ENCODE measurements at regions of chr2 and their contacts with region 1.

Region 1: GRCh38 chr2:172710584-172711024 is 25.0 kb upstream of the RAPGEF4 start:
- DNase-seq: peak; percentile 94
- H3K4me3 ChIP-seq: no peak overlapping the region
- H3K27ac ChIP-seq: no peak overlapping the region
- H3K4me1 ChIP-seq: peaks cover 6% of the 10 kb centered on the region
- H3K27me3 ChIP-seq: no peaks in the 10 kb centered on the region
- CTCF ChIP-seq: peak; percentile 78 to 84

Region 2: DNA sequence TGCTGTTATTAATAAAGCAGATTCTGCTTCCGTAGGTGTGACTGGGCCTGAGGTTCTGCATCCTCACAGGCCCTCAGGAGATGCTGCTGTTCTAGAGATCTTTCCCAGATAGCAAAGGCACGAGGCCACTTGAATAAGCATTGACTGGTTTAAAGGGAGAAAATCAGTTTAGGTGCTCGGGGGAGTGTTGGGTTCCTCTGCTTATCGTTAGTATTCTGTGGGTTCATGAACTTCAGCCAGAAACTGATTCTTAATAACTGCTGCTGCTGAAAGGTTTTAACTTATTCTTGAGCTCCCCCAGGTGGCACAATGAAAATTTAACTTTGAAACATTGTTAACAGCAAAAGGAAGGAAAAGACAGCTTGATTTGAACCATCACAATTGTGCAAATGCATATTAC is 226.4 kb before region 1 on chr2:
- CTCF ChIA-PET with region 1: no interaction called
- dilution Hi-C with region 1: no loop called
- in situ Hi-C with region 1: loop called in 1 of 2 experiments (anchors 25 kb)
- intact Hi-C with region 1: no loop called
- DNase-seq: no peak
- H3K4me3 ChIP-seq: no peak overlapping the region
- H3K27ac ChIP-seq: no peak overlapping the region
- H3K4me1 ChIP-seq: no peaks in the 10 kb centered on the region
- H3K27me3 ChIP-seq: no peaks in the 10 kb centered on the region
- CTCF ChIP-seq: peak; percentile 6 to 16

Region 3: GRCh38 chr2:172516299-172516698 is 194.3 kb before region 1 on chr2:
- CTCF ChIA-PET with region 1: no interaction called
- dilution Hi-C with region 1: no loop called
- in situ Hi-C with region 1: no loop called
- intact Hi-C with region 1: loop called (anchors 5 kb)
- DNase-seq: peak; percentile 69
- H3K4me3 ChIP-seq: no peak overlapping the region
- H3K27ac ChIP-seq: no peak overlapping the region
- H3K4me1 ChIP-seq: no peaks in the 10 kb centered on the region
- H3K27me3 ChIP-seq: no peaks in the 10 kb centered on the region
- CTCF ChIP-seq: no peak

Region 4: DNA sequence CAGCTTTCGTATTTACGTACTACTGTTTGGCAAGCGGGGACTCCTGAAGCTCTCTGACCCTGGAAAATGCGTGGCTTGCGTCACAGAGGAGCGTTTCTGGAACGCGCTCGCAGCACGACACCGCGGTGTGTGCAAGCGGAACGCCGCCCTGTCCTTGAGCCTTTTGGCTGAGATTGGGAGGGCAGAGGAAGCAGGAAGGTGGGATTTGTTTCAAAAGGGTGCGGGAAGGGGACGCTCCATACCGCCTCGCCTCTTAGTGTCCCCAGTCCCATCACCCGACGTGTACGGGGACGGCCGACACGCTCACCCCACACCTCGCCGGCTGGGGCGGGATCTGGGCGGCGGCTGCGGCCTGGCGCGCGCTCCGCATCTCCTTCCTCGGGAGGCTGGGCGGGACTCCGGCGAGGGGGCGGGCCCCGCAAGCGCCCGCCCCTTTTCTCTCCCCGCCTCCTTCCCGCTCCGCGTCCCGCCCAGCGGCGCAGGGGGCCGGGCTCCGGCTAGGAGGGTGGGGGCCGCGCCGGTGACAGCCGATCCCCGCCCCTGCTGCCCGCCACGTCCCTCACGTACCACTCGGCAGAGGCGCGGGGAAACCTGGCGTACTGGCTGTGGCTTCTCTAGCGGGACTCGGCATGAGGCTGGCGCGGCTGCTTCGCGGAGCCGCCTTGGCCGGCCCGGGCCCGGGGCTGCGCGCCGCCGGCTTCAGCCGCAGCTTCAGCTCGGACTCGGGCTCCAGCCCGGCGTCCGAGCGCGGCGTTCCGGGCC is 154.9 kb before region 1 on chr2 and contains the start of gene PDK1:
- CTCF ChIA-PET with region 1: no interaction called
- dilution Hi-C with region 1: no loop called
- in situ Hi-C with region 1: no loop called
- intact Hi-C with region 1: loop called (anchors 1 kb)
- DNase-seq: peak; percentile 92
- H3K4me3 ChIP-seq: peak within 1 kb of the TSS; percentile 84 to 94 (median 94)
- H3K27ac ChIP-seq: peak within 1 kb of the TSS; percentile 98
- H3K4me1 ChIP-seq: peaks cover 45% of the 10 kb centered on the region
- H3K27me3 ChIP-seq: no peaks in the 10 kb centered on the region
- CTCF ChIP-seq: no peak
- total RNA-seq, gene PDK1: 13.8 to 34.0 TPM

Region 5: GRCh38 chr2:172588931-172589330 is 121.7 kb before region 1 on chr2:
- CTCF ChIA-PET with region 1: no interaction called
- dilution Hi-C with region 1: no loop called
- in situ Hi-C with region 1: no loop called
- intact Hi-C with region 1: loop called (anchors 1 kb)
- DNase-seq: peak; percentile 60
- H3K4me3 ChIP-seq: no peak overlapping the region
- H3K27ac ChIP-seq: no peak overlapping the region
- H3K4me1 ChIP-seq: no peaks in the 10 kb centered on the region
- H3K27me3 ChIP-seq: no peaks in the 10 kb centered on the region
- CTCF ChIP-seq: no peak

Region 6: DNA sequence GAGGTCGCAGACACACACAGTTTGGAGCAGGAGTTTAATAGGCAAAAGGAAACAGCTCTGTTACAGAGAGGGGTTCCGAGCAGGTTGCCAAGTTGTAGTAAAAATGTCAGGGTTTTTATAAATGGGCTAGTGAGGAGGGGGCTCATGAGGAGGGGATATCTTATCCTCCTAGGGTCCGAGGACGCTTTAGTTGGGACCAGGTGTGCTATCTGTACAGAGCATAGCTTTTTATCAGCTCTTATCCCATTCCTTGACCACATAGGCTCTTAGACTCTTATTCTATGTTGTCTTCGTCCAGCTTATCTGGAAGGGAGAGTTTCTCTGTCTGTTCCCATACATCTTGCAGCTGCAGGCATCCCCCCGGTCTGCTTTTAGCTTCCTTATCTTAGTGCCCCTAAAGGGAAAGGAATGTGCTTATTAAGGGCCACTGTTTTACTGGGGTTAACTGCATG is 110.0 kb before region 1 on chr2:
- CTCF ChIA-PET with region 1: no interaction called
- dilution Hi-C with region 1: no loop called
- in situ Hi-C with region 1: loop called in 1 of 2 experiments (anchors 5 kb)
- intact Hi-C with region 1: no loop called
- DNase-seq: no peak
- H3K4me3 ChIP-seq: no peak overlapping the region
- H3K27ac ChIP-seq: no peak overlapping the region
- H3K4me1 ChIP-seq: no peaks in the 10 kb centered on the region
- H3K27me3 ChIP-seq: no peaks in the 10 kb centered on the region
- CTCF ChIP-seq: no peak

Region 7: DNA sequence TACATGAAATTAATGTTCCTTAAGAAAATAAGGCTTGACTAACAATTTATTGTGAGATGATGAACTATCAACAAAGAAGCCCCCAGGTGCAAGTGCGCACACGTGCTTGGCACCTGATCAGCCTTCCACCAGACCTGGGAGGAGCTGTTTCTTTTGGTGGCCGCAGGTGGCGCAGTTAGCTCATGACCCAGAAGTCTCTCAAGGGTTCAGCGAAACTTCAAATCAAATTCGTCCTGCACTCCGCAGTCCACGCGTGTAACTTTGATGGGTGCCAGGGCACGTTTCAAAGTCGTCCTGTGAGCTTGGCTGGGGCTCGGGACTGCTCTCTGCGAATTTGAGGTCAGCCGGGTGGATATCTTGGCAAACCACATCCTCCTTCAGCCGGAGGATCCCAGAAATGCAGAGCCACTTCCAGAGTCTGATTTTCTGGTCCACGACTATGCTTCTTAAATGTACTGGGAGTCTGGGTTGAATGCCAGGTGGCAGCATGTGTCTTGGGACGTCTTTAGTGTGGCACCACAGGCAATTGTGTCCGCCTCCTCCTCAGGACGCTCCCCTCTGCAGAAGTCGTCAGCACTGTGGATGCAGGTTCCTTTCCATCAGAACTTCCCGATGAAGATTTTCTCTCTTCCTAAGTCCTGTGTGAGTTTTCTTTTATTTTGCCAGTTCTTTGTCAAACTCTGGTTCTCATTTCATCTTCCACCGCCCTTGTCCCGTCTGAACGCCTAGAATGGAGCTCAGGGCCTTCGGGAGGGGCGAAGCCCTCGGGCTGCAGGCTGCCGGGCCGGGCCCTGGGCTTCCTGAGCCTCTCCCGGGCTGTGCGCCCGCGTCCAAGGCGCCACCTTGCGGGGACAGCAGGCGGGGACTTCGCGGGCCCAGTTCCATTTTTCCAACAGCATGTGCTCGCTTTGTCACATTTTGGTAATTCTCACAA is 36.3 kb before region 1 on chr2:
- CTCF ChIA-PET with region 1: no interaction called
- dilution Hi-C with region 1: no loop called
- in situ Hi-C with region 1: no loop called
- intact Hi-C with region 1: no loop called
- DNase-seq: no peak
- H3K4me3 ChIP-seq: no peak overlapping the region
- H3K27ac ChIP-seq: no peak overlapping the region
- H3K4me1 ChIP-seq: peaks cover 32% of the 10 kb centered on the region
- H3K27me3 ChIP-seq: no peaks in the 10 kb centered on the region
- CTCF ChIP-seq: no peak